PC-3 (cell line): ENCODE measurements at regions of chr2 and their contacts with region 1.

Region 1: GRCh38 chr2:7011356-7012083 is 94.3 kb downstream of the RNF144A start:
- DNase-seq: peak; percentile 96
- ATAC-seq: peak; percentile 71
- H3K4me3 ChIP-seq: no peak overlapping the region
- H3K27ac ChIP-seq: peak overlapping the region; percentile 99
- H3K4me1 ChIP-seq: peaks cover 77% of the 10 kb centered on the region
- H3K27me3 ChIP-seq: no peaks in the 10 kb centered on the region
- CTCF ChIP-seq: no peak

Region 2: DNA sequence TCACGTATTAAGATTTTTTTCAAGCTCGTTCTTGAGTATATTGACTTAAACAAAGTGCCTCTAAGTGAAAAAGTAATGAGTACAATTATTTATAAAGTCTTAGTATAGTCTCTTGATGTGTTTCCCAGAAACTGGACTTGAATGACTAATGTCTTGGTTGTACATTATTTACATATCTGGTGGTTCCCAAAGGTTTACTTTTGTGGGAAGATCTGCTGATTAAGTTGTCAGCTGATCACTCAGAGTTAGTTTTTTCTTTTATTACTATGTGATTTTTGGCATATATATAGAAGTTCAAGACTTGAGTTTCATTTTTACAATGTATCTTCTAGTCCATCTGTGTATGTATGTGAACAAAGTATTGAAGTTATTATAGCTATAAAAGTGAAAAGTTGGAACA is 64.8 kb before region 1 on chr2:
- CTCF ChIA-PET with region 1: no interaction called
- POLR2A ChIA-PET with region 1: interaction called, 3 read pairs
- intact Hi-C with region 1: loop called (anchors 2 kb)
- DNase-seq: peak; percentile 91
- ATAC-seq: peak; percentile 96
- H3K4me3 ChIP-seq: peak overlapping the region; percentile 26; the same call in 1 of the 2 replicates
- H3K27ac ChIP-seq: peak overlapping the region; percentile 88
- H3K4me1 ChIP-seq: peaks cover 20% of the 10 kb centered on the region
- H3K27me3 ChIP-seq: no peaks in the 10 kb centered on the region
- CTCF ChIP-seq: no peak

Region 3: GRCh38 chr2:7031547-7032245 is 20.2 kb after region 1 on chr2:
- CTCF ChIA-PET with region 1: interaction called, 5 read pairs
- POLR2A ChIA-PET with region 1: no interaction called
- intact Hi-C with region 1: loop called (anchors 1 kb)
- DNase-seq: peak; percentile 100
- ATAC-seq: peak; percentile 86
- H3K4me3 ChIP-seq: no peak overlapping the region
- H3K27ac ChIP-seq: peak overlapping the region; percentile 59
- H3K4me1 ChIP-seq: peaks cover 16% of the 10 kb centered on the region
- H3K27me3 ChIP-seq: no peaks in the 10 kb centered on the region
- CTCF ChIP-seq: peak; percentile 48; the same call in 1 of the 2 replicates

Region 4: GRCh38 chr2:7707723-7708122 is 696.2 kb after region 1 on chr2:
- CTCF ChIA-PET with region 1: no interaction called
- POLR2A ChIA-PET with region 1: no interaction called
- intact Hi-C with region 1: no loop called
- DNase-seq: peak; percentile 94
- ATAC-seq: peak; percentile 88
- H3K4me3 ChIP-seq: no peak overlapping the region
- H3K27ac ChIP-seq: peak overlapping the region; percentile 94
- H3K4me1 ChIP-seq: peaks cover 34% of the 10 kb centered on the region
- H3K27me3 ChIP-seq: no peaks in the 10 kb centered on the region
- CTCF ChIP-seq: no peak